Calu3 (cell line): ENCODE measurements at regions of chr18 and their contacts with region 1.

Region 1: GRCh38 chr18:48675352-48675761 is 136.5 kb downstream of the CTIF start:
- DNase-seq: peak; percentile 92
- H3K4me3 Mint-ChIP-seq: no peak overlapping the region
- H3K27ac Mint-ChIP-seq: no peak overlapping the region
- H3K4me1 Mint-ChIP-seq: no peaks in the 10 kb centered on the region
- H3K27me3 Mint-ChIP-seq: no peaks in the 10 kb centered on the region
- CTCF ChIP-seq: peak; percentile 94

Region 2: GRCh38 chr18:49041435-49042245 is 366.3 kb after region 1 on chr18:
- CTCF ChIA-PET with region 1: no interaction called
- intact Hi-C with region 1: loop called (anchors 5 kb)
- DNase-seq: peak; percentile 70
- H3K4me3 Mint-ChIP-seq: no peak overlapping the region
- H3K27ac Mint-ChIP-seq: no peak overlapping the region
- H3K4me1 Mint-ChIP-seq: no peaks in the 10 kb centered on the region
- H3K27me3 Mint-ChIP-seq: no peaks in the 10 kb centered on the region
- CTCF ChIP-seq: peak; percentile 71

Region 3: GRCh38 chr18:49238433-49239042 is 563.2 kb after region 1 on chr18:
- CTCF ChIA-PET with region 1: no interaction called
- intact Hi-C with region 1: loop called (anchors 1 kb)
- DNase-seq: peak; percentile 36
- H3K4me3 Mint-ChIP-seq: no peak overlapping the region
- H3K27ac Mint-ChIP-seq: no peak overlapping the region
- H3K4me1 Mint-ChIP-seq: no peaks in the 10 kb centered on the region
- H3K27me3 Mint-ChIP-seq: no peaks in the 10 kb centered on the region
- CTCF ChIP-seq: peak; percentile 62

Region 4: GRCh38 chr18:49412679-49413078 is 737.3 kb after region 1 on chr18:
- CTCF ChIA-PET with region 1: no interaction called
- intact Hi-C with region 1: loop called (anchors 10 kb)
- DNase-seq: no peak
- H3K4me3 Mint-ChIP-seq: no peak overlapping the region
- H3K27ac Mint-ChIP-seq: no peak overlapping the region
- H3K4me1 Mint-ChIP-seq: no peaks in the 10 kb centered on the region
- H3K27me3 Mint-ChIP-seq: no peaks in the 10 kb centered on the region
- CTCF ChIP-seq: no peak